CD14-positive monocyte (primary cell): ENCODE measurements at regions of chr15 and their contacts with region 1.

Region 1: GRCh38 chr15:93001881-93002280 is 87.1 kb downstream of the RGMA start:
- DNase-seq: no peak
- H3K4me3 ChIP-seq: no peak overlapping the region
- H3K4me3 Mint-ChIP-seq: no peak overlapping the region
- H3K27ac ChIP-seq: no peak overlapping the region
- H3K27ac Mint-ChIP-seq: peak overlapping the region in 1 of 7 donors; percentile 9
- H3K4me1 ChIP-seq: no peaks in the 10 kb centered on the region
- H3K4me1 Mint-ChIP-seq: no peaks in the 10 kb centered on the region
- H3K27me3 ChIP-seq: no peaks in the 10 kb centered on the region
- H3K27me3 Mint-ChIP-seq: peaks cover 0 to 2% (median 0%) of the 10 kb centered on the region in 3 donors
- CTCF ChIP-seq: no peak

Region 2: DNA sequence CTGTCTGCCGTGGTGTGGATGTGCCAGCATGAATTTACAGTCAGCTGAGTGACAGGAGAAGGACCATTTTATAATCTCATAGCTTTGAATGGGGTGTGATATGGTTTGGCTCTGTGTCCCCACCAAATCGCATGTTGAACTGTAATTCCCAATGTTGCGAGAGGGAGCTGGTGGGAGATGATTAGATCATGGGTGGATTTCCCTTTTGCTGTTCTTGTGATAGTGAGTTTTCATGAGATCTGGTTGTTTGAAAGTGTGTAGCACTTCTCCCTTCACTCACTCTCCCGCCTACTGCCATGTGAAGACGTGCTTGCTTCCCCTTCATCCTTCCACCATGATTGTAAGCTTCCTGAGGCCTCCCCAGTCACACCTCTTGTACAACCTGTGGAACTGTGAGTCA is 213.7 kb before region 1 on chr15:
- intact Hi-C with region 1: no loop called
- DNase-seq: no peak
- H3K4me3 ChIP-seq: no peak overlapping the region
- H3K4me3 Mint-ChIP-seq: no peak overlapping the region
- H3K27ac ChIP-seq: no peak overlapping the region
- H3K27ac Mint-ChIP-seq: no peak overlapping the region
- H3K4me1 ChIP-seq: no peaks in the 10 kb centered on the region
- H3K4me1 Mint-ChIP-seq: peaks cover 1% of the 10 kb centered on the region
- H3K27me3 ChIP-seq: no peaks in the 10 kb centered on the region
- H3K27me3 Mint-ChIP-seq: peaks cover 0 to 4% (median 0%) of the 10 kb centered on the region in 3 donors
- CTCF ChIP-seq: no peak

Region 3: DNA sequence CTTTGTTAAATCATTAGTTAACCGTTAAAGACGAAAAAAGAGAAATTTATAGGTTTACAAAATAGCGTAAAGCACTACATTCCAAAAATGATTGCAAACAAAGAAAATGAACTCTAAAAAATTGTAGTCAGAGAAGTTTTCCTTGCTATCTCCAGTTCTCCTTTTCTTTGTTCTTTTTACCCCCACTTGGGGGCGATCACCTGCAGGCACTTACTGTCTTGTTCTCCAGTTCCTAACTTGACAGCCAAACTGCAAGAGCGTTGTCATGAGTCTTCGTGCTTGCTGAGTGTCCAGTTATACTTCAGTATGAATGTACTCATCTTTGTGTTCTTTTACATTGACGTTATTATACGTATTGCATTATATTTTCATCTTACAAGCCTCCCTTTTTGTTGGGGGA is 47.3 kb before region 1 on chr15:
- intact Hi-C with region 1: loop called in 1 of 2 experiments (anchors 10 kb)
- DNase-seq: no peak
- H3K4me3 ChIP-seq: no peak overlapping the region
- H3K4me3 Mint-ChIP-seq: no peak overlapping the region
- H3K27ac ChIP-seq: no peak overlapping the region
- H3K27ac Mint-ChIP-seq: no peak overlapping the region
- H3K4me1 ChIP-seq: no peaks in the 10 kb centered on the region
- H3K4me1 Mint-ChIP-seq: peaks cover 12% of the 10 kb centered on the region
- H3K27me3 ChIP-seq: no peaks in the 10 kb centered on the region
- H3K27me3 Mint-ChIP-seq: peaks cover 0 to 2% (median 0%) of the 10 kb centered on the region in 3 donors
- CTCF ChIP-seq: peak; percentile 52

Region 4: GRCh38 chr15:92968926-92969651 is 32.8 kb before region 1 on chr15:
- intact Hi-C with region 1: loop called in 1 of 2 experiments (anchors 5 kb)
- DNase-seq: peak in 1 of 3 donors; percentile 10
- H3K4me3 ChIP-seq: no peak overlapping the region
- H3K4me3 Mint-ChIP-seq: no peak overlapping the region
- H3K27ac ChIP-seq: peak overlapping the region; percentile 23 to 57
- H3K27ac Mint-ChIP-seq: peak overlapping the region; percentile 65 to 88 (median 74)
- H3K4me1 ChIP-seq: peaks cover 9 to 22% of the 10 kb centered on the region in 2 donors
- H3K4me1 Mint-ChIP-seq: peaks cover 25% of the 10 kb centered on the region
- H3K27me3 ChIP-seq: no peaks in the 10 kb centered on the region
- H3K27me3 Mint-ChIP-seq: no peaks in the 10 kb centered on the region
- CTCF ChIP-seq: no peak

Region 5: DNA sequence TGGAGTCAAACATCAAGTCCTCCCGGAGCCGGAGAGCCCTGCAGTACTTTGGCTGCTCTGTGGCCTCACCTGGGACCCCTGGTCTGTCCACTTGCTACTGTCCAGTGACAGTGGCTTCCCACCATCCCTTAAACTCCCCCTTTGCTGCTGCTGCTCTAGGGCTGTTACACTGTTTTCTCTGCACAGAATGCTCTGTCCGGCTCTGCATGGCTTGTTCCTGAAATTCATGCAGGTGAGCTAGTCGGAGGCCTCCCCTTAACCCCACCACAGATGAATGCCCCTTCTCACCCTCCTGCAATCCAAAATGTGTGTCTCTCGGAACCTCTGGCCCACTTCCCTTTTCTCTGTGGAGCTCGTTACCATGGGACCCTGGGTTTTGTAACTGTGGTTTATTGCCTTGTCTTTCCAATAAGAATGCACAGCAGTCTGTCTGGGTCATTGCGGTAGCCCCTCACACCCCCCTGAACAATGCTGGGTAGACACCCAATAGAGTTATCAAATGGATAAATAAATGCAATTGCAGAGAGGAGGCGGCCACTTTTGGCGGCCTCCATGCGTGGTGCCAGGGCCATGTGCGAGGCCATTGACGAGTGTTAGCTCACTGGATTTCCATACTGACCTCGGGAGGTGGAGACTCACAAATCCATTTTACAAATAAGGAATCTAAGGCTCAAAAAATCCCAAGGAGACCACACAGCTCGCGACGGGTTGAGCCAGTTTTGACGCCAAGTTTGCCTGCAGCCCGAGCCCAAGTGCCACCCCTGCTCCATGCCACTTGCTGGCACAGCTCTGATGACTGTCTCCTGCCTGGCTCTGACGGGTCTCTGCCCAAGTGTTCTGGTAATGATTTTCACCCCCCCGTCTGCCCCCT is 38.6 kb after region 1 on chr15:
- intact Hi-C with region 1: no loop called
- DNase-seq: peak; percentile 36 to 55 (median 43)
- H3K4me3 ChIP-seq: peak overlapping the region in 1 of 3 experiments; percentile 30
- H3K4me3 Mint-ChIP-seq: peak overlapping the region in 1 of 2 donors; percentile 79
- H3K27ac ChIP-seq: no peak overlapping the region
- H3K27ac Mint-ChIP-seq: peak overlapping the region in 4 of 7 donors; percentile 40 to 96 (median 68)
- H3K4me1 ChIP-seq: peaks cover 66 to 74% of the 10 kb centered on the region in 2 donors
- H3K4me1 Mint-ChIP-seq: peaks cover 77% of the 10 kb centered on the region
- H3K27me3 ChIP-seq: no peaks in the 10 kb centered on the region
- H3K27me3 Mint-ChIP-seq: peaks cover 0 to 4% (median 0%) of the 10 kb centered on the region in 3 donors
- CTCF ChIP-seq: no peak